ENCODE measurements at regions of chr7 and their contacts with region 1.

Region 1: DNA sequence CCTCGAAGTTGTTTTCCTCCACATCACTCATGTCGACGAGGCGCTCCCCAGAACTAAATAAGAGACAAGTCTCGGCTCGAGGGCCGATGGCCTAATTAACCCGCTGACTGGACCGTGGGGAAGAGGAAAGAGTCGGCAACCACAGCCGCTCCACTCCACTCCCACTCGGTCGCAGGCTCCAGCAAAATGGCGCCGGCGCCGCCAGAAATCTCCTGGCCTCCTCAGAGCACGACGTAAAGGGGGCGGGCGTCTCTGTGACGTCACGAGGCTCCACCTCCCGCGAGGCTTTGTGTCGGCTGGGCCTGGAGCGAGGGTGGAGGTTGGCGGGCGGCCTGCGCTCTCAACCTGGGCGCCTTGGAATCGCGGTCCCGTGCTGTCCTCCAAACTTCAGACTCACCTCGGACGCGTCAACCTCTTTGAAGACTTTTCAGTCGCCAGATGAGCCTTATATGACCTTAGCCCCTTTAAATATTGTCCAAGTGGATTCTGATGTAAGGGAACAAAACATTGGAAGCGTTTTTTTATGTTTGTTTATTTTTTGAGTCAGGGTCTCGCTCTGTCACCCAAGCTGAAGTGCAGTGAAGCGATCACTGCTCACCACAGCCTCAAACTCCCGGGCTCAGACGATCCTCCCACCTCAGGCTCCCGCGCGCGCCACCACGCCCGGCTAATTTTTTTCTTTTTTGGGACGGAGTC is at the start of gene TRA2A:
- DNase-seq: peak; percentile 97 to 99
- ATAC-seq: peak; percentile 98 to 99 (median 99)
- H3K4me3 ChIP-seq: peak within 1 kb of the TSS; percentile 99
- H3K27ac ChIP-seq: peak within 1 kb of the TSS; percentile 98
- H3K4me1 ChIP-seq: peaks cover 35% of the 10 kb centered on the region
- H3K27me3 ChIP-seq: no peaks in the 10 kb centered on the region
- CTCF ChIP-seq: no peak
- total RNA-seq, gene TRA2A: 25.1 to 31.5 (median 28.5) TPM

Region 2: GRCh38 chr7:22726345-22727185 is 805.4 kb before region 1 on chr7:
- intact Hi-C with region 1: loop called in 1 of 2 experiments (anchors 5 kb)
- DNase-seq: peak; percentile 35 to 72
- ATAC-seq: peak; percentile 74 to 89 (median 85)
- H3K4me3 ChIP-seq: peak overlapping the region; percentile 60
- H3K27ac ChIP-seq: peak overlapping the region; percentile 65
- H3K4me1 ChIP-seq: peaks cover 37% of the 10 kb centered on the region
- H3K27me3 ChIP-seq: no peaks in the 10 kb centered on the region
- CTCF ChIP-seq: peak; percentile 68

Region 3: GRCh38 chr7:23273141-23273599 is 258.8 kb before region 1 on chr7:
- intact Hi-C with region 1: loop called in 1 of 2 experiments (anchors 5 kb)
- DNase-seq: peak; percentile 82 to 92
- ATAC-seq: peak; percentile 97 to 99 (median 98)
- H3K4me3 ChIP-seq: peak overlapping the region; percentile 59
- H3K27ac ChIP-seq: peak overlapping the region; percentile 71
- H3K4me1 ChIP-seq: peaks cover 7% of the 10 kb centered on the region
- H3K27me3 ChIP-seq: no peaks in the 10 kb centered on the region
- CTCF ChIP-seq: peak; percentile 85

Region 4: GRCh38 chr7:23474094-23474828 is 57.7 kb before region 1 on chr7:
- intact Hi-C with region 1: loop called in 1 of 2 experiments (anchors 5 kb)
- DNase-seq: peak; percentile 69 to 82
- ATAC-seq: peak; percentile 64 to 81 (median 79)
- H3K4me3 ChIP-seq: peak overlapping the region; percentile 56
- H3K27ac ChIP-seq: no peak overlapping the region
- H3K4me1 ChIP-seq: peaks cover 11% of the 10 kb centered on the region
- H3K27me3 ChIP-seq: peaks cover 19 to 100% (median 39%) of the 10 kb centered on the region in 3 donors
- CTCF ChIP-seq: no peak

Region 5: GRCh38 chr7:23597094-23598091 is 65.5 kb after region 1 on chr7 and contains the start of gene CCDC126:
- intact Hi-C with region 1: loop called in 1 of 2 experiments (anchors 5 kb)
- DNase-seq: peak; percentile 94 to 96
- ATAC-seq: peak; percentile 97 to 99 (median 99)
- H3K4me3 ChIP-seq: peak within 1 kb of the TSS; percentile 84
- H3K27ac ChIP-seq: peak within 1 kb of the TSS; percentile 97
- H3K4me1 ChIP-seq: peaks cover 19% of the 10 kb centered on the region
- H3K27me3 ChIP-seq: no peaks in the 10 kb centered on the region
- CTCF ChIP-seq: no peak
- total RNA-seq, gene CCDC126: 9.8 to 13.4 (median 12.6) TPM

Region 6: DNA sequence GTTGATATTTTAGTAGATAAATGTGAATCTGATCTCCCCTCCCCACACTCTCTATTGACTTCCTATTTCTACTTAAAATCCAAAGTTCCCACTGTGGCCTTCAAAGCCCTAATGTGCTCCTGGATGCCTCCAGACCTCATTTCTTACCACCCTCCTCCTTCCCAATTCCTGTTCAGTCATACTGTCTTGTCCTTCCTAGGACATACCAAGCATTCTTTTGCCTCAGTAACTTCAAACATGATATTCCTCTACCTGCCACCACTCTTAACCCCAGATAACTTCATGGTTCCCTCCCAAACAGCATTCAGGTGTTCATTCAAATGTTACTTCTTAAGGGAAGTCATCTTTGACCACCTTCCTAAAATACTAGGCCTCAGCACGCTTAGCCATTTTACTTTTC is 113.9 kb after region 1 on chr7:
- intact Hi-C with region 1: no loop called
- DNase-seq: no peak
- ATAC-seq: no peak
- H3K4me3 ChIP-seq: no peak overlapping the region
- H3K27ac ChIP-seq: no peak overlapping the region
- H3K4me1 ChIP-seq: no peaks in the 10 kb centered on the region
- H3K27me3 ChIP-seq: no peaks in the 10 kb centered on the region
- CTCF ChIP-seq: no peak